Activated CD4-positive, alpha-beta memory T cell treated with anti-CD3 and anti-CD28 coated beads, Interleukin-2, amount 10 ng/mL, durations not matched to agents 7 days and 5 days (primary cell): ENCODE measurements at regions of chr1 and their contacts with region 1.

Region 1: DNA sequence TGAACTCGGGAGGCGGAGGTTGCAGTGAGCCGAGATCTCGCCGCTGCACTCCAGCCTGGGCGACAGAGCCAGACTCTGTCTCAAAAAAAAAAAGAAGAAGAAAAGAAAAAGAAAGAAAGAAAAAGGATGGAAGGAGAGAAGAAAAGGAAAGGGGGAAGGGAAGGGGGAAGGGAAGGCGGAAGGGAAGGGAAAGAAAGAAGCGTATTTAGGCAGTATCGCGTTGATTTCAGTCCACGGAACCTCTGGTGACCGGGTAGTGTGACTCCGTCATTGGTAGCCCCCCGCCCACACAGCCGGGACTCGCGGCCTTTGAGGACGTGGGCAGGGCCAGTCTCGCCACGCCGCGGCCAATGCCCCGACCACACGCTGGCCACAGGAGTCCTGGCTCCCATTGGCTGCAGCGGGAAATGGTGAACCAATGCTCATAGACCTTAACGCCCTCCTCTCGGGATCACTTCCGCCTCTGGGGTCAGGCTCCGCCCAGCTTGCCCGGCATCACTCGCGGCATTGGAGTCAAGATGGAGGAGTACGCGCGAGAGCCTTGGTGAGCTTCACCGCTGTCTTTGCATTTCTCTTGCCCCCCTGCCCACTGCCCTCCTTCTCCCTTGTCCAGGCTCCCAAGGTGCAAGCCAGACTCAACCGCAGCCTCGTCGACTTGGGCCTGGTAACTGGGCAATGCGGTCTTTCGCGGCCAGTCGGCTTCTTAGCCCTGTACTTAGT is at the start of gene TIMM17A:
- DNase-seq: peak; percentile 96
- H3K4me3 Mint-ChIP-seq: peak within 1 kb of the TSS; percentile 95
- H3K27ac Mint-ChIP-seq: peak within 1 kb of the TSS; percentile 93
- H3K4me1 Mint-ChIP-seq: peaks cover 26% of the 10 kb centered on the region
- H3K27me3 Mint-ChIP-seq: no peaks in the 10 kb centered on the region
- total RNA-seq, gene TIMM17A: 42.5 to 44.8 TPM

Region 2: DNA sequence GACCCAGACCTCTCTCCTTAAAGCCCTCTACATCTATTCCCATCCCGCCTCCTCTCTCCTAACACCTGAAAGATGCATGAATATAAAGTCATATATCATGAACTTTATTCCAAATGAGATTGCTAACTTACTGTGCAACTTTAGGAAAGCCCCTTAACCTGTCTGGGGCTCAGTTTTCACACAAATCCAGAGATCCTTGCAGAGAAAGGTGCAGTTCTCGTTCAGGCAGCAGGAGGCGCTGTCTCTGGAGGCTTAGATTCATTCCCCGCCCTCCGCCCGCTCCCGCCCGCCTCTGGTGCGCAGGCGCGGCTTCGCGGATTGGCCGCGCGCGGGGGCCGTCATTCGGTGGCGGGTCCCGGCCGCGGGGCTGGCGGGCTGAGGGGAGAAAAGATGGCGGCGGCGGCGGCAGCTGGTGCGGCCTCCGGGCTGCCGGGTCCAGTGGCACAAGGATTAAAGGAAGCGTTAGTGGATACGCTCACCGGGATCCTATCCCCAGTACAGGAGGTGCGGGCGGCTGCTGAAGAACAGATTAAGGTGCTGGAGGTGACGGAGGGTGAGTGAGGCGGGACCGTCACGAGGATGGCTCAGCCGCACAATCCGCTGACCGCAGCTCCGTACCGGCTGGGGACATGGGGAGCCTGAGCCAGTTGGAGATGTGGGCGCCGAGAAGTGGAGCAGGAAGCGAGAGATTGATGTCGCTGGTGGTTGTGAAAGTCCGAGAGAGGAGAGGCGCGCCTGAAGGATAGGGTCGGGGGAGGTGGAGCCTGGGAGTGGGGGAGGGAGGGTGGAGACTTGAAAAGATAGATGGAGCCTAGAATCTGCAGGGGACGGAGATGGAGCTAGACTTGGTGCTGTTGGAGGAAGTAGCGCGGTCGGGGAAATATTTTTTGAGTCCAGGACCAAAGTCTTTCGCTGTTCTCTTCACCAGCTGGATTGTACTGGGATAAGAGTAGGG is 126.1 kb before region 1 on chr1 and contains the start of gene IPO9:
- CTCF ChIA-PET with region 1: no interaction called
- POLR2A ChIA-PET with region 1: interaction called, 13 read pairs
- DNase-seq: peak; percentile 95
- H3K4me3 Mint-ChIP-seq: peak within 1 kb of the TSS; percentile 94
- H3K27ac Mint-ChIP-seq: peak within 1 kb of the TSS; percentile 90
- H3K4me1 Mint-ChIP-seq: peaks cover 40% of the 10 kb centered on the region
- H3K27me3 Mint-ChIP-seq: no peaks in the 10 kb centered on the region
- total RNA-seq, gene IPO9: 44.3 to 49.5 TPM

Region 3: DNA sequence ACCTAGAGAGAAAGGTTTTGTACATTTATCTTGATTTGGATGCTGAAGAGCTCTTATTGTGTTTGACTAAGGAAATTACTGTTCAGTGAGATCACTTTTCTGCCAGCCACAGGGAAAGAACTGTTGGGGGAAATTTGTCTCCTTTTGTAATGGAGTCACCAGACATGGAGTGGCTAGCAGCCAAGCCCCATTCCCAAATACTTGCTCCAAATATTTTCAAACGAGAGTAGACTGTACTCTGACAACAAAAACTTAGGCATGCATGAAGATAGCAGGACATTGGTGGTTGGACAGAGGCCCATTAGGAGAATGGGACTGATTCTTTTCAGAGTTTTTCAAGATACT is 105.1 kb before region 1 on chr1:
- CTCF ChIA-PET with region 1: no interaction called
- POLR2A ChIA-PET with region 1: no interaction called
- DNase-seq: no peak
- H3K4me3 Mint-ChIP-seq: no peak overlapping the region
- H3K27ac Mint-ChIP-seq: no peak overlapping the region
- H3K4me1 Mint-ChIP-seq: peaks cover 4% of the 10 kb centered on the region
- H3K27me3 Mint-ChIP-seq: no peaks in the 10 kb centered on the region

Region 4: DNA sequence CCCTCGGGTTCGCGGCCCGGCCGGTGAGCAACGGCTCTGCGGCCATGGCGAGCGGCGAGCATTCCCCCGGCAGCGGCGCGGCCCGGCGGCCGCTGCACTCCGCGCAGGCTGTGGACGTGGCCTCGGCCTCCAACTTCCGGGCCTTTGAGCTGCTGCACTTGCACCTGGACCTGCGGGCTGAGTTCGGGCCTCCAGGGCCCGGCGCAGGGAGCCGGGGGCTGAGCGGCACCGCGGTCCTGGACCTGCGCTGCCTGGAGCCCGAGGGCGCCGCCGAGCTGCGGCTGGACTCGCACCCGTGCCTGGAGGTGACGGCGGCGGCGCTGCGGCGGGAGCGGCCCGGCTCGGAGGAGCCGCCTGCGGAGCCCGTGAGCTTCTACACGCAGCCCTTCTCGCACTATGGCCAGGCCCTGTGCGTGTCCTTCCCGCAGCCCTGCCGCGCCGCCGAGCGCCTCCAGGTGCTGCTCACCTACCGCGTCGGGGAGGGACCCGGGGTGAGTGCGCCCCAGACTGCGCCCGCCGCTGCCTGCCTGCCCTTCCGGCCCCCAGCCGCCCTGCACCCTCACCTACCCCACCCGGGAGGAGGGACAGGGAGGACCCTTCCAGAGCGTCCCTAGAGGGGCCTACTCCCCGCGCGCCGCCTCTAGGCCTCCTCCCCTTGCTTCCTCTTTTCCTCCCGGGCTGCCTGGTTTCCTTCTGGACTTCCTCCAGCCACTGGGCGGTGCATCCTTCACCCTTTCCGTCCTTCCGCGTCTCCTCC is 27.6 kb after region 1 on chr1 and contains the start of gene RNPEP:
- CTCF ChIA-PET with region 1: interaction called, 5 read pairs
- POLR2A ChIA-PET with region 1: interaction called, 13 read pairs
- DNase-seq: peak; percentile 57
- H3K4me3 Mint-ChIP-seq: peak within 1 kb of the TSS; percentile 97
- H3K27ac Mint-ChIP-seq: peak within 1 kb of the TSS; percentile 74
- H3K4me1 Mint-ChIP-seq: peaks cover 28% of the 10 kb centered on the region
- H3K27me3 Mint-ChIP-seq: no peaks in the 10 kb centered on the region
- total RNA-seq, gene RNPEP: 38.5 to 41.1 TPM

Region 5: GRCh38 chr1:202018468-202019255 is 63.5 kb after region 1 on chr1:
- CTCF ChIA-PET with region 1: no interaction called
- POLR2A ChIA-PET with region 1: no interaction called
- DNase-seq: no peak
- H3K4me3 Mint-ChIP-seq: no peak overlapping the region
- H3K27ac Mint-ChIP-seq: no peak overlapping the region
- H3K4me1 Mint-ChIP-seq: peaks cover 16% of the 10 kb centered on the region
- H3K27me3 Mint-ChIP-seq: peaks cover 16% of the 10 kb centered on the region